ENCODE measurements at regions of chr12 and their contacts with region 1.

Region 1: DNA sequence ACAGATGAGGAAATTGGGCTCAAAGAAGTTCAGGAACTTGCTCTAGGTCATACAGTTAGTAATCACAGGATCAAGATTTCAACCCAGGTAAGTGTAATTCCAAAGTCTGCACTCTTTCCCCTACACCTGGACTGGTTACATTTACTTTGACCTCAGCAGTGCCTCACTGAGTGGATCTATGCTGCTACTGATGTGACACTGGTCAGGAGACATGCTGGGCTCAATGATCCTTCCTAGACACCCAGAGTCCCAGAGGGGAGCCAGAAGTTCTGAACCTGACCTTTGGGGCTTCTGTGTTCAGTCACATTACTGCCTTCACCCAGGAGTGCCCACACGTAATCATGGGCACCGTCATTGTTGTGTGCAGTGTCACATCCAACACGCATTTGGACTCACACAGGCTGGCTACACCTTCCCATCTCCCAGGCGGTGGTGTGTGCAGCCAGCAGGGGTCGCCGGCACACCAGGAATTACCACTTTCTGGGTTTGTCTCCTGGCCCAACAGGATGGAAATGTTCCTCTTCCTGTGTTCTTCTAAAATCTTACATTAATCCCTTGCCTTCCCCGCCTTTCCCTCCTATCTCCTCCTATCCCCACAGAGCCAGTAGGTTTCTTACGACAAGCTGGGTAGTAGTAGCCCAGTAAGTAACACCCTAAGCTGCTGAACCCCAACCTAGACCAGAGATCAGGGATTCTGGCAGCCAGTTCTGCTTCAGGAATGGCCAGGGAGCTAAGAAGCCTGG is 25.6 kb downstream of the CALCOCO1 start:
- DNase-seq: peak in 1 of 2 experiments; percentile 79
- H3K4me3 ChIP-seq: no peak overlapping the region
- H3K27ac ChIP-seq: no peak overlapping the region
- H3K4me1 ChIP-seq: peaks cover 3% of the 10 kb centered on the region; the same call in 1 of the 2 replicates
- H3K27me3 ChIP-seq: peaks cover 22% of the 10 kb centered on the region
- CTCF ChIP-seq: peak; percentile 82

Region 2: DNA sequence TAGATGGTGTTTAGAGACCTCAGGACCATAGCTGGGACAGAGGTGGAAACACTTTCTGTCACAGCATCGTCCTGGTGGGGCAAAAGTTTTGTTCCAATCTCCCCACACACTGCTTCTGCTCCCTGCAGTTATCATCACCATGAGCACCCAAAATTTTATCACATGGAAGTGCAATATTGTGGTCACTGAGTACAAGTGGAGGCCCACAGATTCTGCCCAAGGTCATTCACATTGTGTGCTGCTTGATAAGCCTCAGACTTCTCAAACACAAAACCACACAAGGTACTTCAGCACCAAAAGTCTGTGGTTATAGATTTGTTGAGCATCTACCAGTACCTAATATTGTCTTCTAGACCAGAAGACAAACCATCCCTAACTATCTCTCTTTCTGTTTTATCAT is 997.8 kb before region 1 on chr12:
- CTCF ChIA-PET with region 1: interaction called, 14 read pairs
- POLR2A ChIA-PET with region 1: no interaction called
- intact Hi-C with region 1: no loop called
- DNase-seq: no peak
- H3K4me3 ChIP-seq: no peak overlapping the region
- H3K27ac ChIP-seq: no peak overlapping the region
- H3K4me1 ChIP-seq: no peaks in the 10 kb centered on the region
- H3K27me3 ChIP-seq: no peaks in the 10 kb centered on the region
- CTCF ChIP-seq: no peak

Region 3: GRCh38 chr12:53659011-53659551 is 42.6 kb before region 1 on chr12:
- CTCF ChIA-PET with region 1: no interaction called
- POLR2A ChIA-PET with region 1: no interaction called
- intact Hi-C with region 1: no loop called
- DNase-seq: peak; percentile 44 to 68
- H3K4me3 ChIP-seq: no peak overlapping the region
- H3K27ac ChIP-seq: peak overlapping the region; percentile 27
- H3K4me1 ChIP-seq: peaks cover 16% of the 10 kb centered on the region
- H3K27me3 ChIP-seq: no peaks in the 10 kb centered on the region
- CTCF ChIP-seq: no peak

Region 4: GRCh38 chr12:54201001-54201794 is 499.5 kb after region 1 on chr12:
- CTCF ChIA-PET with region 1: no interaction called
- POLR2A ChIA-PET with region 1: no interaction called
- intact Hi-C with region 1: loop called (anchors 2 kb)
- DNase-seq: peak; percentile 52 to 75
- H3K4me3 ChIP-seq: no peak overlapping the region
- H3K27ac ChIP-seq: no peak overlapping the region
- H3K4me1 ChIP-seq: 0 out of 2 replicates have a peak, but pooled peaks cover under 1% of the 10 kb centered on the region
- H3K27me3 ChIP-seq: no peaks in the 10 kb centered on the region
- CTCF ChIP-seq: peak; percentile 93

Region 5: DNA sequence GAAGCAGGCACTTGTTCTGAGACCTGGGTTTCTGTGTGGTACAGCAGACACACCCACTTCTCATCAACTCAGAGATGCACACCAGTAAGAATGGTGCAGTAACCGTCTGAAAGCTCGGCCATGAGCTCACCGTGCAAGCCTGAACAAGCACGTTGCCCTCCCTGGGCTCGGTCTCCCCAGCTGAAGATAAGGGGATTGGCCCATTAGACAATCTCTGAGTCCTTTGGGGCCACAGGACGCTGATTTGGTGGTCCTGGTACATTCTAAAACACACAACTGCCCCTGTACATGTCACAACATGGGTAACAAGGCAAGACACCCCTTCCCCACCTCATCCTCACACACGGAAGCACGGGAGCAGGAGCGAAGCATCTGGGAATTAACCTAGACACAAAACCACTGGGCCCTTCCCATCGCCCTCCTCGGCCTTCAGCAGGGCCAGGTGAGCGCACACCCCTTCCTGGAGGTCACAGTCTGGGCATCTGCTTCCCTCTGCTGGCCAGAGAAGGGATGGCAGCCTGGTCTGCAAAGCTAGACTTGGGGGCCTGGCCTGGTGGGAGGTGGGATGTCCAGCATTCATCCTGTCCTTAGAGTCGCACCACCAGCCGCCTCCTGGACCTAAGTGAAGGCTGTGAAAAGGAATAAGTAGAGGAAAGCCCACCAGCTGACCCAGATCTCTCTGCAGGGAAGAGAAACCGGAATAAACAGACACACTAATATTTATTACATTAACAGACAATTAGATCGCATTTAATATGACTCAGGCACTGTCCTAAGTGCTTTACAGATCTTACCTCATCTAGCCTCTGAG is 506.0 kb after region 1 on chr12:
- CTCF ChIA-PET with region 1: no interaction called
- POLR2A ChIA-PET with region 1: no interaction called
- intact Hi-C with region 1: loop called (anchors 2 kb)
- DNase-seq: peak; percentile 62 to 82
- H3K4me3 ChIP-seq: no peak overlapping the region
- H3K27ac ChIP-seq: no peak overlapping the region
- H3K4me1 ChIP-seq: no peaks in the 10 kb centered on the region
- H3K27me3 ChIP-seq: no peaks in the 10 kb centered on the region
- CTCF ChIP-seq: peak; percentile 96

Measured in PC-9 (cell line).